Activated CD4-positive, alpha-beta T cell treated with anti-CD3 and anti-CD28 coated beads for 36 hours (primary cell): ENCODE measurements at regions of chr7 and their contacts with region 1.

Region 1: DNA sequence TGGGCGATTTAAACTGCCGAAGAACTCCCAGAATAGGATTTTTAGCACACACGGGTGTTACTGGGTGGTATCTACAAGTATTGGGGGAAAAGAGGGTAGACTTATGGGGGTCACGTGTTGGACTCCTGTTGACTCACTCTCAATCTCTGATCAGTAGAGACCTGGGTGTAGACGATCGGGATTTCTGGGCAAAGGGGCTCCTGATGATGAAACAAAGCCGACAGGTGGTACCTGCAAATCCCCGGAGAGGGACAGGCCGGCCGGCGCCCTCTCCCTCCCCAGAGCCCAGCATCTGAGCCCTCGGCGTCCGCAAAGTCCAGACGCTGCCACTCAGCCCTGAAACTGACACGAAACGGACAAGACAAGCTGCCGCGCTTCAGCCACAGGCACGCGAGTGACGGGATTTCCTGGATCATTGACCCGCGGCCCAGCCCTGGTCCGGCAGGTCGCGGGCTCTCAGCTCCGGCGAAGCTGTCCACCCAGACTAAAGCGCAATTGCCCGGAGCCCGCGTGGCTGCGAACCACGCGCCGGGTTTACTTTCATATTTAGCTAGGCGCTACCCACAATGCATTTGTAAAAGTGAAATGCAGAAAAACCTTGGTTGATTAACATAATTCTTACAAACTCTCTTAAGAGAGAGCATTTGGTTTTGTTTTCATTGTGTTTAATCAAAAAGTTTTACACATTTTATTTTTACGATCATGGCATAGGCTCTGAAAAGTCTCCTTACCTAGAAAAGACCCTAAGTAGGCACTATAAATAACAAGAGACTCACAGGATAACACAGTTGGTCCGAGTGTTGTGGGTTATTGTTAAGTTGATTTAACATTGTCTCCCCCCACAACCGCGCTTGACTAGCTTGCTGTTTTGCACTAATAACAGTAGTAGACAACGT is 56.9 kb upstream of the EZH2 start:
- DNase-seq: peak; percentile 78
- ATAC-seq: peak; percentile 68
- H3K4me3 Mint-ChIP-seq: peak overlapping the region; percentile 98
- H3K27ac Mint-ChIP-seq: peak overlapping the region; percentile 100
- H3K4me1 Mint-ChIP-seq: peaks cover 16% of the 10 kb centered on the region
- H3K27me3 Mint-ChIP-seq: no peaks in the 10 kb centered on the region

Region 2: DNA sequence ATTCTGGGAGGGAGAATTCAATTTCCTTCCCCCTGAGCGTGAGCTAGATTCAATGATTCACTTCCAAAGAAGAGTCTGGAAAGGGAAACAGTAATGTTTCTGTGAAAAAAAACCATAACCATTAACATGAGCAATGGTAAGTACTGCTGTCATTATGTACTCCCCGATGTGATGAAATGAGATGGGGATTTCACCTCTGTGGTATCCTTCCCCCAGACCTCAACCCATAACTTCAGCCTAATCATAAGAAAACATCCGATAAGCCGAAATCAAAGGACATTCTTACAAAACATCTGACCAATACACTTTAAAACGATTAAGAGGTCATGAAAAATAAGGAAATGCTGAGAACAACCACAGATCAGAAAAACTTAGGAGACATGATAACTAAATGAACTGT is 84.1 kb before region 1 on chr7:
- CTCF ChIA-PET with region 1: interaction called, 26 read pairs
- POLR2A ChIA-PET with region 1: interaction called, 4 read pairs
- intact Hi-C with region 1: loop called (anchors 1 to 2 kb)
- DNase-seq: peak; percentile 45
- ATAC-seq: peak; percentile 87
- H3K4me3 Mint-ChIP-seq: peak overlapping the region; percentile 9
- H3K27ac Mint-ChIP-seq: peak overlapping the region; percentile 59
- H3K4me1 Mint-ChIP-seq: peaks cover 42% of the 10 kb centered on the region
- H3K27me3 Mint-ChIP-seq: no peaks in the 10 kb centered on the region

Region 3: GRCh38 chr7:148925836-148926235 is 15.1 kb before region 1 on chr7:
- CTCF ChIA-PET with region 1: interaction called, 12 read pairs
- POLR2A ChIA-PET with region 1: interaction called, 3 read pairs
- intact Hi-C with region 1: no loop called
- DNase-seq: no peak
- ATAC-seq: no peak
- H3K4me3 Mint-ChIP-seq: no peak overlapping the region
- H3K27ac Mint-ChIP-seq: peak overlapping the region; percentile 91
- H3K4me1 Mint-ChIP-seq: peaks cover 59% of the 10 kb centered on the region
- H3K27me3 Mint-ChIP-seq: no peaks in the 10 kb centered on the region

Region 4: GRCh38 chr7:148987010-148987750 is 46.2 kb after region 1 on chr7:
- CTCF ChIA-PET with region 1: interaction called, 5 read pairs
- POLR2A ChIA-PET with region 1: no interaction called
- intact Hi-C with region 1: loop called in 1 of 2 experiments (anchors 1 kb)
- DNase-seq: peak; percentile 88
- ATAC-seq: peak; percentile 84
- H3K4me3 Mint-ChIP-seq: peak overlapping the region; percentile 90
- H3K27ac Mint-ChIP-seq: peak overlapping the region; percentile 97
- H3K4me1 Mint-ChIP-seq: peaks cover 40% of the 10 kb centered on the region
- H3K27me3 Mint-ChIP-seq: peaks cover 2% of the 10 kb centered on the region